ENCODE measurements at regions of chr11 and their contacts with region 1.

Region 1: DNA sequence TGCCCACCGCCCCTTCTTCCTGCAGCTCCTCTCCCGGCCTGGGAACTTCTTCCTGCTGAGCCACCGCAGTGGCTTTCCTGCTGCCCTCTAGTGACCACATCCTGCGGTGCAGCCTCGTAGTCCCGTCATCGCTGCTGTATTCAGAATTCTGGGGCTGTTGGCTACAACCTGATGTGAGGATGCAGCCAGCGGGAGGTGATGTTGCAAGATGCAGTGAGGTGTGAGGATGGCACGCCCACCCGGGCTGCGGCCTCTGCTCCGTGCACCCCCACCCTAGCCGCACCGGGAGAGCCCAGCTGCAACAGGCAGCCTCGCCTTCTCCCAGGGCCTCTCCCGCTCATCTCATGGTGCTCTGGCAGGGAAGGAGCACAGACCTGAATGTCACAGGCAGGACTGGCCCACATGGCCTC is 10.1 kb downstream of the CHST1 start:
- DNase-seq: peak; percentile 64 to 85
- H3K4me3 ChIP-seq: no peak overlapping the region
- H3K27ac ChIP-seq: no peak overlapping the region
- H3K4me1 ChIP-seq: peaks cover 0 to 54% (median 16%) of the 10 kb centered on the region in 4 donors
- H3K27me3 ChIP-seq: peaks cover 0 to 31% of the 10 kb centered on the region in 2 donors
- CTCF ChIP-seq: peak; percentile 89 to 96

Region 2: GRCh38 chr11:45411228-45411946 is 244.0 kb before region 1 on chr11:
- intact Hi-C with region 1: loop called (anchors 5 kb)
- DNase-seq: no peak
- H3K4me3 ChIP-seq: no peak overlapping the region
- H3K27ac ChIP-seq: peak overlapping the region in 1 of 2 donors; percentile 52
- H3K4me1 ChIP-seq: peaks cover 0 to 5% (median 0%) of the 10 kb centered on the region in 4 donors
- H3K27me3 ChIP-seq: peaks cover 0 to 8% of the 10 kb centered on the region in 2 donors
- CTCF ChIP-seq: no peak